ENCODE measurements at regions of chr14 and their contacts with region 1.

Region 1: DNA sequence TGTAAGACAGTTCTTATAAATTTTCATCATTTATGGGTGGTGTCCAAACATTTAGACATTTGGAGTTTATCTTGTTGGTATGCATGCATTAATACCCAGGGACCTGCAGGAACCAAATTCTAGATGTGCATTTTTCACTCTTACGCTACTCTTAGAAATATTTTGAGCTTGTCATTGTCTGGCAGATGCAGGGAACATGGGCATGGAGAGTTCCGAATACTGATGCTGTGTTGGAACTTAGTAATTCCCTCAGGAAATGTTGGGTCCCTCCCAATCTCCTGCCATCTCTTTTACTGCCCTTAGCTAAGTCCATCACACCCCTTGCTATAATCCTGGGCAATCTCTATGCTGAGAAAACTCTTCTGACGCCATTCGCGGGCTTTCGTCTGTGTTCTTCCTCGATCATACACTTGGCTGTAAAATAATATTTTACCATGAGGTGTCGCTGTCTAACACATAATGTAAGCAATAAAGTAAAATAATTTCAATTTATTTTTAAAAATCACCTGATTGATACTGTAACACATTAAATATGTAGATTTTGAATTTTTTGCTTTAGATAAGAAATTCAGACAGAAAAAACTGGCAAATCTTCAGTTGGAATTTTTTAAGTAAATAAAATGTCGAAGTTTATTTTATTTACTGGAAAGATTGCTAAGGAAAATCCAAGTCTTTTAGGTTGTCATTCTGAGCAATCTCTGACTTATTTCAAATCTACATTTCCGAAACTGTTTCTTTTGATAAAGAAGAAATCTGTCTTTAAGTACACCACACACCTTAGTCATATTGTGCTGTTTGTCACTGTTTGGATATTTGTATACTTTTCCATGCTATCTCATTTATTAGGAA is 304.1 kb upstream of the SSTR1 start:
- DNase-seq: peak; percentile 77
- H3K4me3 ChIP-seq: no peak overlapping the region
- H3K27ac ChIP-seq: no peak overlapping the region
- H3K4me1 ChIP-seq: peaks cover 3% of the 10 kb centered on the region
- H3K27me3 ChIP-seq: no peaks in the 10 kb centered on the region
- CTCF ChIP-seq: peak; percentile 81

Region 2: DNA sequence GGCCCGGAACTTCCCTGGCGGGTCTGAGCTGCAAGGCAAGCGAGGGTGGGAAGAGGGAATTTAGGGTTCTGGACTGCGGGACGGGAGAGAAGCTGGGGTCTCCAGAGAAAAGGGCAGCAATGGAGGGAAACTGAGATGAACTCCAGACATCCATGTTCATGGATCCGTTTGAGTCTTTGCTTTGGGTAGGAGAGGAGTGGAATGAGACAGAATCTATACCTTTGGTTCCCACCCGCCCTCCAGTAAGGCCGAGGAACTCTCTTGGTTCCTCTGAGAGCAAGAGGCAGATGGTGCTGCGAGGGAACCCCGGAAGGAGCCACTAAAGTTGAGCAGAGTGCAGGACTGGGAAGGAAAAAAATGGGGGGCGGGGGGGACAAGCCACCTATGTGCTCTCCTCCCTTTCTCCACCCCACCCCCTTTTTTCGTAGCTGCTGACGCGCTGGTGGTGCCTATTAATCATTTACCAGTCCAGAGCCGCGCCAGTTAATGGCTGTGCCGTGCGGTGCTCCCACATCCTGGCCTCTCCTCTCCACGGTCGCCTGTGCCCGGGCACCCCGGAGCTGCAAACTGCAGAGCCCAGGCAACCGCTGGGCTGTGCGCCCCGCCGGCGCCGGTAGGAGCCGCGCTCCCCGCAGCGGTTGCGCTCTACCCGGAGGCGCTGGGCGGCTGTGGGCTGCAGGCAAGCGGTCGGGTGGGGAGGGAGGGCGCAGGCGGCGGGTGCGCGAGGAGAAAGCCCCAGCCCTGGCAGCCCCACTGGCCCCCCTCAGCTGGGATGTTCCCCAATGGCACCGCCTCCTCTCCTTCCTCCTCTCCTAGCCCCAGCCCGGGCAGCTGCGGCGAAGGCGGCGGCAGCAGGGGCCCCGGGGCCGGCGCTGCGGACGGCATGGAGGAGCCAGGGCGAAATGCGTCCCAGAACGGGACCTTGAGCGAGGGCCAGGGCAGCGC is 305.3 kb after region 1 on chr14:
- CTCF ChIA-PET with region 1: interaction called, 4 read pairs
- POLR2A ChIA-PET with region 1: no interaction called
- intact Hi-C with region 1: loop called (anchors 5 kb)
- DNase-seq: peak; percentile 81
- H3K4me3 ChIP-seq: peak overlapping the region; percentile 55
- H3K27ac ChIP-seq: no peak overlapping the region
- H3K4me1 ChIP-seq: peaks cover 4% of the 10 kb centered on the region
- H3K27me3 ChIP-seq: peaks cover 26% of the 10 kb centered on the region
- CTCF ChIP-seq: peak; percentile 48

Region 3: DNA sequence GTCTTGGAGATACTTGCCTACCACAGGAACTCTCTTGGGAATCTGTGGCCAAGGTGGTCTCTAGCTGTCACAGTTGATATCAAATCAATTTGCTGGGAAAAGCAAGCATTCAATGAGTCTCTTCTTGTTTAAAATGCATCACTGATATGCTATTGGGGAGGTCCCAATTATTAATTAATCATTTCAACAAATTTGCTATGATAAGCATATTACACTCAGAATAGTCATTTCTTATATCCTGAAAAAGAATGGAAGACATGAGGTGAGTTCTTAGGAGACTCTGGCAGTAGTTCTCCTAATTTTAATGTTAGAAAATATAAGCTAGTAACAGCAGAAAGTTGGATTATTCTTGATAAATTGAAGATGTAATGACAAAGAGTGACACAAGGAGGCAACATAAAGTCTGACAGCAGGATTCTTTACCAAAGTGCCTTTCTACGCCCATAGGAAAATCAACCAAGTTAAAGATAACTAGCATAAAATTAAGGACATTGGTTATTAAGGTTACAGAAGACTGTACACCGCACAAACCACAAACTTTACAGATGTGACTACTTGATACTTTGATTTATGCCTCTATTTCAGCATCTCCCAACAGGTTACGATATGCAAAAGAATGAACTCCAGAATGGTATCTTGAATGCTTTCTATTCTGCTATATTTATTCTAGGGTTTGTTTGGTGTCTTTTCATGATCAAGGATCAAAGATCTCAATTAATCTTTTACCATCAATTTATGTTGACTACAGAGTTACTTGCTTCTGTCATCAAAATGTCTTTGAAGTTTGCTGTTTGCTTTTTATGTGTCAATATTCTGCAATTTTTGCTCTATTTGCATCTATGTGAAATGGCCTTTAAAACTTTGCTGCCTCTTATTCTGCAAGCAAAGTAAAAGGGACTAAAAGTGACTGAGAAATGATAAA is 701.9 kb after region 1 on chr14:
- CTCF ChIA-PET with region 1: no interaction called
- POLR2A ChIA-PET with region 1: no interaction called
- intact Hi-C with region 1: loop called (anchors 10 kb)
- DNase-seq: peak; percentile 20
- H3K4me3 ChIP-seq: no peak overlapping the region
- H3K27ac ChIP-seq: no peak overlapping the region
- H3K4me1 ChIP-seq: no peaks in the 10 kb centered on the region
- H3K27me3 ChIP-seq: no peaks in the 10 kb centered on the region
- CTCF ChIP-seq: peak; percentile 43; the same call in 1 of the 2 replicates

Region 4: GRCh38 chr14:38721822-38722431 is 818.4 kb after region 1 on chr14:
- CTCF ChIA-PET with region 1: no interaction called
- POLR2A ChIA-PET with region 1: no interaction called
- intact Hi-C with region 1: loop called (anchors 5 kb)
- DNase-seq: peak; percentile 77
- H3K4me3 ChIP-seq: no peak overlapping the region
- H3K27ac ChIP-seq: no peak overlapping the region
- H3K4me1 ChIP-seq: peaks cover 7% of the 10 kb centered on the region
- H3K27me3 ChIP-seq: no peaks in the 10 kb centered on the region
- CTCF ChIP-seq: peak; percentile 90

Region 5: DNA sequence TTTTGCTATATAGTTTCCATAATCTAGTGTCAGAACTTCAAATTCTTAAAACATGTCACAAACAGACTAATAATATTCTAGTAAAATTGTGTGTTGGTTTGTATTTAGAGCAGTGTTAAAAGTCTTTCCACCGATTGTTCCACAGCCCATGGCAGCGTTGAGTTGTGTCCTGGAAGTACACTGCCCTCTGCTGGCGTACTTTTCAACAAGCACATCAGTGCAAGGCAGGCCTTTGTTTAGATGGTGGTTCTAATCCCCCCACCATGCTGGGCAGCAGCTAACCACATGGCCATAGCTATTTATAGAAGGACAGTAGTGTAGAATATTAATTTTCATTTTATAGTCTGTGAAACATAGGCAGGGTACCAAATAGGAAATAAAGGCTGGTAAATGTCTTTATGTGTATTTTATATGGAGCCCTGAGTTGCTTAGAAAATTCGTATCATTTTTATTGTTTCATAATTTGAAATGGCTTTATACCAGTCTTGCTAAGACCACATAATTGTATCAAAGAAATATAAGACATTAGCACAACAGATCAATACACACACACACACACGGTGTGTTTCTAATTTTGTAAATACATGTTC is 964.1 kb after region 1 on chr14:
- CTCF ChIA-PET with region 1: interaction called, 3 read pairs
- POLR2A ChIA-PET with region 1: no interaction called
- intact Hi-C with region 1: loop called (anchors 2 kb)
- DNase-seq: peak; percentile 90
- H3K4me3 ChIP-seq: no peak overlapping the region
- H3K27ac ChIP-seq: no peak overlapping the region
- H3K4me1 ChIP-seq: peaks cover 17% of the 10 kb centered on the region
- H3K27me3 ChIP-seq: no peaks in the 10 kb centered on the region
- CTCF ChIP-seq: peak; percentile 89

Region 6: GRCh38 chr14:39015360-39015961 is 1111.9 kb after region 1 on chr14:
- CTCF ChIA-PET with region 1: no interaction called
- POLR2A ChIA-PET with region 1: no interaction called
- intact Hi-C with region 1: loop called (anchors 5 kb)
- DNase-seq: peak; percentile 69
- H3K4me3 ChIP-seq: no peak overlapping the region
- H3K27ac ChIP-seq: no peak overlapping the region
- H3K4me1 ChIP-seq: peaks cover 5% of the 10 kb centered on the region
- H3K27me3 ChIP-seq: no peaks in the 10 kb centered on the region
- CTCF ChIP-seq: peak; percentile 90

Measured in A673 (cell line).